ENCODE measurements at regions of chr1 and their contacts with region 1.

Region 1: DNA sequence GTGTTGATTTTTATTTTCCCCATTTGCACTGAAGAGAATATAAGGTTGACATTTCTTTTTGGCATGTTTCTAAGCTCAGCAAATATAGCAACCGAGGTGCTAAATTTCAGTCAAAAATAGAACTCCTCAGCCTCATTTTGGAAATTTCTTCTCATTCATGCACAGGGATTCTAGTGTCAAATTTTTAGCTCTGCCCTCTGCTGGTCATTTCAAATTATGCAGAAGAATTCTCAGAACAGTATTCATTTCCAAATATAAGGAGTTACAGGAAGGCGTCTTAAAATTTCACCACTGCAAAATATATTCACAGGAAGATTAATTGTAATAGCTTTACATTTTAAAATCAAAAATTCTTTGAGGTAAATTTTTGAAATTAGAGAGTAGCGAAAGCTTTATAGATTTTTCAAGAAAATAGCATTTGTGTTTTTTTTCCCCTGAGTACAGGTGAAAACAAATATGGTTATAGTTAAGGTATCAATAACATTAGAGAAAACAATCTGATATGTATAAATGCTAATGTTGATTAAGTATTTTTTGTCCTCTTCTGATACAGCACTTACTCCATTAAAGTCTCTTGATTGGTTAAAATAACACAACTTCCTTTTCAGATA is 57.9 kb downstream of the FMN2 start:
- DNase-seq: peak in 1 of 2 experiments; percentile 45
- H3K4me3 ChIP-seq: no peak overlapping the region
- H3K4me3 Mint-ChIP-seq: no peak overlapping the region
- H3K27ac Mint-ChIP-seq: no peak overlapping the region
- H3K4me1 ChIP-seq: no peaks in the 10 kb centered on the region
- H3K4me1 Mint-ChIP-seq: no peaks in the 10 kb centered on the region
- H3K27me3 ChIP-seq: no peaks in the 10 kb centered on the region
- H3K27me3 Mint-ChIP-seq: peaks cover 7% of the 10 kb centered on the region
- CTCF ChIP-seq: peak; percentile 60 to 66

Region 2: DNA sequence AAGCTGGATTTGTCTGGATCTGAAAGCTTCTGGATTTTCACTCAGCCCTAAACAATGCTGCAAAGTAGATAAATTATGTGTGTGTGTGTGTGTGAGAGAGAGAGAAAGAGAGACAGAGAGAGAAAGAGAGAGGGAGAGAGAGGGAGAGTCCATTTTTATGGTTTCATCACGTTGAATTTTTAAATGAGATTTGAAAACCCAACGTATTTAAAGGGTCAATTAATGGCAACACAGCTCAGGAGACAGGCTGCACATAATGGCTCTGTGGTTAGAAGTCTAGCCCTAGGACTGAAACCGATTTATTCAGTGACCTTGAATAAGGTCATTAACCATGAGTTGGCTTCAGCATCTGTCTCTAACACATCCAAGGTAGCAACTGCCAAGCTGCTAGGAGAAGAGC is 93.2 kb before region 1 on chr1:
- CTCF ChIA-PET with region 1: no interaction called
- POLR2A ChIA-PET with region 1: interaction called, 10 read pairs
- intact Hi-C with region 1: no loop called
- DNase-seq: no peak
- H3K4me3 ChIP-seq: no peak overlapping the region
- H3K4me3 Mint-ChIP-seq: no peak overlapping the region
- H3K27ac Mint-ChIP-seq: no peak overlapping the region
- H3K4me1 ChIP-seq: no peaks in the 10 kb centered on the region
- H3K4me1 Mint-ChIP-seq: no peaks in the 10 kb centered on the region
- H3K27me3 ChIP-seq: no peaks in the 10 kb centered on the region
- H3K27me3 Mint-ChIP-seq: peaks cover 8% of the 10 kb centered on the region
- CTCF ChIP-seq: no peak

Measured in Caco-2 (cell line).